HCT116 (cell line): ENCODE measurements at regions of chr20 and their contacts with region 1.

Region 1: DNA sequence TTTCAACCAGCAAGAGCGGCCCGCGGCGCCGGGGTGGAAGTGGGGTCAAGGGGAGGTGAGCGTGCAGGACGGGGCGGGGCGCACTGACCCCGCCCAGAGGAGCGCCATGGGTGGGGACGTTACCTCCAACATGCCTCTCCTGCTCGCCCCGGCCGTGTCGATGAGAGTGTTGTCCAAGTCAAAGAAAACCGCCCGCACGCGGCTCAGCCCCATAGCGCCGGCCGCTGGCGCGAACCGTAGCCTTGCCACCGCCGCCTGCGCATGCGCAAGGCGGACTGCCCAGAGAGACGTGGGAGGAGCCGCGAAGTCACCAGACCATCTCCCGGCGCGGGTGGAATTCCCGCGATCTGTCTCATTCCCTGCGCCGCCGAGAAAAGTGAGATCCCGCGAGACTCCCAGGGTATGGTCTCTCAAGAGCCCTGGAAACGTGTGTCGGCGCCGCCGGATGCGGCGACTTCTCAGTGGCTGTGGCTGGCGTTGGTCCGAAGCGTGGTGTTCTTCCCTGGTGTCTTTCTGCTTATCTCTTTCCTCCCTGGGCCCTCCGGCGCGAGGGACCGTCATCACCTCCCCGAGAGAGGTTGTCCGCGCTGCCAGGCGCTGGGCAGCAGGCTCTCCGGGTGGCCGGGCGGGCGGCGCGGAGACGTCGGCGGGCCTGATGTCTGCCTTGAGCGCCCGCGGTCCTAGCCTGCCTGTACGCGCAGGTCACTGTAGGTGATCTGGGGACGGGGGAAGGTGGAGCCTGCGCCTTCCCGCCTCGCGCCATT is at the start of gene NANP:
- DNase-seq: peak; percentile 96
- ATAC-seq: peak; percentile 92
- H3K4me3 ChIP-seq: peak within 1 kb of the TSS; percentile 71 to 88
- H3K27ac ChIP-seq: peak within 1 kb of the TSS; percentile 98
- H3K4me1 ChIP-seq: peaks cover 9 to 23% of the 10 kb centered on the region in 2 experiments; a peak in 3 of 4 replicates
- H3K27me3 ChIP-seq: no peaks in the 10 kb centered on the region
- CTCF ChIP-seq: no peak
- POLR2A ChIP-seq: peak; percentile 96
- RAD21 ChIP-seq: no peak
- total RNA-seq, gene NANP: 7.3 TPM

Region 2: GRCh38 chr20:25643716-25644115 is 19.8 kb after region 1 on chr20:
- CTCF ChIA-PET with region 1: no interaction called
- POLR2A ChIA-PET with region 1: no interaction called
- RAD21 ChIA-PET with region 1: no interaction called
- intact Hi-C with region 1: loop called (anchors 2 kb)
- DNase-seq: no peak
- ATAC-seq: no peak
- H3K4me3 ChIP-seq: no peak overlapping the region
- H3K27ac ChIP-seq: no peak overlapping the region
- H3K4me1 ChIP-seq: no peaks in the 10 kb centered on the region
- H3K27me3 ChIP-seq: no peaks in the 10 kb centered on the region
- CTCF ChIP-seq: no peak
- POLR2A ChIP-seq: no peak
- RAD21 ChIP-seq: no peak

Region 3: DNA sequence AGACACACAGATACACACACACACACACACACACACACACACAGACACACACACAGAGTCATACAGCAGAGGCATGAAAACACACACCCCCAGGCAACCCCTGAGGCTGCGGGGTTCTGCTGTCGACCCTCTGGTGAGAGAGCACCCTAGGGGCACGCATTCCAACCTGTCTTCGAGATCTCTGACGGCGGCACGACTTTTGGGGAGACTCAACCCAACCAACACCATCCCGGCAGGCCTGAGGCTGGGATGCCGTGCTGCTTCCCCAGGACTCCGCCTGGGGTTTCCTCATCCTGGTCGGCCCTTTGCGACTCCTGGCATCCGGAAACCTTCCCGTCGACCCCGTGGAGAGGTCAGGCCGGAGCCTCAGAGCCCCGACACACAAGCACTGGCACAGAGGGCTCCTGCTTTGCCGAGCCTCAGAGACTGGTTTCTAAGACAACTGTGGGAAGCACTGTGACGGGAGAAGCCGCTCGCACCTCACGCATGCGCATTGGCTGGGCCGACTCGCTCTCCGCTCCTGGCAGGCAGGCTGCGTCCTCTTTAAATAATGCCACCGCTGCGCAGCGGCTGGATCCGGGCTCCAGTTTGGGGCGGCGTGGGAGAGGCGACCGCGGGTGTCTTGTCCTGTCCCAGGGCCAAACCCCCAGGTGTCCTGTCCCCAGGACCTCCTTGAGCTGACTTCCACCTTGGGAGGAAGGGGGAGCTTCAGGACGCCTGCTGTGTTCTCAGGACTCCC is 241.6 kb after region 1 on chr20:
- CTCF ChIA-PET with region 1: no interaction called
- POLR2A ChIA-PET with region 1: no interaction called
- RAD21 ChIA-PET with region 1: no interaction called
- intact Hi-C with region 1: no loop called
- DNase-seq: peak; percentile 49
- ATAC-seq: peak; percentile 75
- H3K4me3 ChIP-seq: peak overlapping the region; percentile 32 to 55
- H3K27ac ChIP-seq: no peak overlapping the region
- H3K4me1 ChIP-seq: peaks cover 0 to 30% of the 10 kb centered on the region in 2 experiments; a peak in 1 of 4 replicates
- H3K27me3 ChIP-seq: no peaks in the 10 kb centered on the region; the same call in 1 of the 2 replicates
- CTCF ChIP-seq: no peak
- POLR2A ChIP-seq: no peak
- RAD21 ChIP-seq: no peak